Psoas muscle (tissue), 8 donors: ENCODE measurements at regions of chr15 and their contacts with region 1.

Region 1: GRCh38 chr15:72873379-72874233 is 90.0 kb upstream of the ADPGK start:
- DNase-seq: peak; percentile 83 to 94
- ATAC-seq: peak; percentile 87 to 90 (median 88)
- H3K4me3 ChIP-seq: no peak overlapping the region
- H3K27ac ChIP-seq: peak overlapping the region; percentile 86
- H3K4me1 ChIP-seq: peaks cover 50% of the 10 kb centered on the region
- H3K27me3 ChIP-seq: no peaks in the 10 kb centered on the region
- CTCF ChIP-seq: no peak

Region 2: GRCh38 chr15:72783563-72784237 is 89.9 kb before region 1 on chr15 and contains the start of gene ADPGK:
- intact Hi-C with region 1: loop called in 1 of 2 experiments (anchors 10 kb)
- DNase-seq: peak; percentile 91 to 95
- ATAC-seq: peak; percentile 92 to 98 (median 96)
- H3K4me3 ChIP-seq: peak within 1 kb of the TSS; percentile 91
- H3K27ac ChIP-seq: peak within 1 kb of the TSS; percentile 95
- H3K4me1 ChIP-seq: peaks cover 31% of the 10 kb centered on the region
- H3K27me3 ChIP-seq: no peaks in the 10 kb centered on the region
- CTCF ChIP-seq: no peak
- total RNA-seq, gene ADPGK: 7.9 to 13.6 (median 10.5) TPM

Region 3: GRCh38 chr15:72796515-72797337 is 76.9 kb before region 1 on chr15:
- intact Hi-C with region 1: loop called in 1 of 2 experiments (anchors 1 kb)
- DNase-seq: peak; percentile 78
- ATAC-seq: peak; percentile 92 to 98 (median 95)
- H3K4me3 ChIP-seq: peak overlapping the region; percentile 81
- H3K27ac ChIP-seq: peak overlapping the region; percentile 78
- H3K4me1 ChIP-seq: peaks cover 3% of the 10 kb centered on the region
- H3K27me3 ChIP-seq: no peaks in the 10 kb centered on the region
- CTCF ChIP-seq: peak; percentile 79

Region 4: DNA sequence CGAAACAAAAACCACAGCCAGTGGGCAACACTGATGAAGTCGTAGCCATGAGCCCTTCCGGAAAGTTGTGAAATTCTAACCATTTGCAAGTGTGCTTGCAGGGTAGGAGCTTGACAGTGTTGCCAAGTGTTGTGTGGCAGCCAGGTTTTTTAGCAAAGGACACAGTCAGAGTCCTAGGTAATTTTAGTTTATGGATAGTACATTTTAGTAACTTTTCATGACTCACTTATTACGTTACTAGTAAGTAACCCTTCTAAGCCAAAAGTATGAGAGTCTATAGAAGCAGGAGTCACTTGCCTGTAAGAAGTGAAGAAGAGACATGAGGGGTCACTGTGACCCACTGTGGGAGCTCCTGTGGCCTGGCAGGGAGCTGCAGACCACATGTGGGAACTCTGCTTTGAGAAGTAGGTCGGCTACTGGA is 35.3 kb before region 1 on chr15:
- intact Hi-C with region 1: loop called (anchors 1 to 2 kb)
- DNase-seq: peak; percentile 55 to 78
- ATAC-seq: peak; percentile 79 to 85 (median 82)
- H3K4me3 ChIP-seq: no peak overlapping the region
- H3K27ac ChIP-seq: peak overlapping the region; percentile 91
- H3K4me1 ChIP-seq: peaks cover 33% of the 10 kb centered on the region
- H3K27me3 ChIP-seq: no peaks in the 10 kb centered on the region
- CTCF ChIP-seq: no peak

Region 5: GRCh38 chr15:72968531-72968922 is 94.9 kb after region 1 on chr15:
- intact Hi-C with region 1: loop called in 1 of 2 experiments (anchors 10 kb)
- DNase-seq: peak in 1 of 2 donors; percentile 49
- ATAC-seq: no peak
- H3K4me3 ChIP-seq: no peak overlapping the region
- H3K27ac ChIP-seq: peak overlapping the region; percentile 57
- H3K4me1 ChIP-seq: peaks cover 51% of the 10 kb centered on the region
- H3K27me3 ChIP-seq: no peaks in the 10 kb centered on the region
- CTCF ChIP-seq: no peak

Region 6: GRCh38 chr15:73051811-73052678 is 178.4 kb after region 1 on chr15 and contains the start of gene NEO1:
- intact Hi-C with region 1: loop called in 1 of 2 experiments (anchors 10 kb)
- DNase-seq: peak; percentile 89 to 95
- ATAC-seq: peak; percentile 91 to 95 (median 94)
- H3K4me3 ChIP-seq: peak within 1 kb of the TSS; percentile 79
- H3K27ac ChIP-seq: peak within 1 kb of the TSS; percentile 90
- H3K4me1 ChIP-seq: peaks cover 52% of the 10 kb centered on the region
- H3K27me3 ChIP-seq: no peaks in the 10 kb centered on the region
- CTCF ChIP-seq: no peak
- total RNA-seq, gene NEO1: 22.5 to 33.3 (median 26.0) TPM